Ascending aorta (tissue), 2 donors: ENCODE measurements at regions of chr17 and their contacts with region 1.

Region 1: GRCh38 chr17:18183334-18184142 is at the start of gene ALKBH5:
- DNase-seq: peak; percentile 96 to 99
- H3K4me3 ChIP-seq: peak within 1 kb of the TSS; percentile 86 to 96
- H3K27ac ChIP-seq: peak within 1 kb of the TSS; percentile 97 to 99
- H3K4me1 ChIP-seq: peaks cover 20 to 24% of the 10 kb centered on the region in 2 donors
- H3K27me3 ChIP-seq: no peaks in the 10 kb centered on the region
- CTCF ChIP-seq: peak in 2 of 3 experiments; percentile 10 to 25
- total RNA-seq, gene ALKBH5: 73.4 TPM

Region 2: GRCh38 chr17:17972126-17972951 is 211.2 kb before region 1 on chr17 and contains the starts of genes DRC3 and TOM1L2:
- intact Hi-C with region 1: loop called (anchors 5 kb)
- DNase-seq: peak; percentile 100
- H3K4me3 ChIP-seq: peak within 1 kb of the TSS; percentile 56 to 69
- H3K27ac ChIP-seq: peak within 1 kb of the TSS; percentile 86 to 87
- H3K4me1 ChIP-seq: peaks cover 6 to 17% of the 10 kb centered on the region in 2 donors
- H3K27me3 ChIP-seq: no peaks in the 10 kb centered on the region
- CTCF ChIP-seq: peak in 1 of 3 experiments; percentile 7
- total RNA-seq, gene DRC3: 7.2 TPM
- total RNA-seq, gene TOM1L2: 39.0 TPM

Region 3: DNA sequence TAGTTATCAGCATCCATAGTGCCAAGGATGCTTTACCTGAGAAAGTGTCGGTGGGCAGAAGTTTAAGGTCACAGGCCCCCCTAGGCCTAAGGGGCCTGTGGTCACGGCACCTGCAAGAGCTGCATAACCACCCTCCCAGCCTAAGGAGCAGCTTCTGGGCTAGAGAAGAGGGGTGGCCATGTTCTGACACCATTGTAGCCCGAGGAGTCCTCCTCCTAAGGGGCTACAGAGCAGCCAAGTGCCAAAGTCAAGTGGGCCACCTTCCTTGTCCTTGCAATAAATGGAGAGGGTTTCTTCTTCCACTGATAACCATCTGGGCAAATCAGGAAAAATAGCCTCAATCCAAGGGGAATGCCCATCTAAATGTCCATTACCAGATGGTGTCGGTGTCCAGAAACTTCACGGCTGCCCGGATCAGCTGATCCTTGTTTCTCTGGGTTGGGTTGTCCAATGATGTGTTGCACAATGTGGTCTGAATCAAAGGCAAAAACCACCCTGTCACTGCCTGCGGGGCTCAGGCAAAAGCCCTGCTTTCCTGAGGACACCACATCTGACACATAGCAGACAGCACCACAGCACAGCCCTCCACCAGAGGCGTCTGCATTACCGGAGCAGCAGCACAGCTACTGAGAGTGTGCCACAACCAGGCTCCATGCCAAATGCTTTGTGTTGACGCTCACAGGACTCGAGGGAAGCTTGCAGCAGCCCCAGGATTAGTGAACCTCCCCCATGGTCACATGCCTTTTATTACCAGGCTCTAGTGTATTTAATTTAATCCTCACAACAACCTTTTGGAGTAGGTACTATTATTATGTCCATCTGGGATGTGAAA is 157.4 kb before region 1 on chr17:
- intact Hi-C with region 1: no loop called
- DNase-seq: peak in 1 of 2 donors; percentile 30
- H3K4me3 ChIP-seq: no peak overlapping the region
- H3K27ac ChIP-seq: no peak overlapping the region
- H3K4me1 ChIP-seq: no peaks in the 10 kb centered on the region
- H3K27me3 ChIP-seq: no peaks in the 10 kb centered on the region
- CTCF ChIP-seq: no peak

Region 4: DNA sequence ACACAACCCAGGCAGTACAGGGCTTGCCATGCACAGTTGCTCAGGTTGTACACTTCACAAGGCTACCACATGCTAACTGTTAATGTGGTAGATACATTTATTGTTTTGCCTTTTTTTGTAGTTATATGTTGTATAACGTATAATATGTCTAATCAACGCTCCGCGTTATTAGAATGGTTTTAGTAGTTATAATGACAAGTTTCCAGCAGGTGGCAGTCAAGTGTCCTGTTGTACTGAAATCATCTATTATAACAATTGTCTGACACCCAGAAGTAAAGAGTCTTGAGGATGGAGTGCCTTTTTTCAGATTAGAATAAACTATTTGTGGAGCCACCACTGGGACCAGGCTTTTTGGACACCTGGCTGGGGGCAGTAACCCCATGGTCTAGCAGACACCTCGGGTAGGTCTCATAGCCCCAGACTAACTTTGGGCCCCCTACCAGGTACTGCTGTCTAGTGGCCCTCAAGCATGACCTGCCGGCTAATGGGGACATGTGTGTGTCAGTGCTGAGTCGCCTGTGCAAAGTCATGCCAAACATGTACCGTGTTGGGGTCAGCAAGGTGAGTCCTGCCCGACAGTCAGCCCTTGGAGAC is 42.2 kb before region 1 on chr17:
- intact Hi-C with region 1: loop called (anchors 2 kb)
- DNase-seq: no peak
- H3K4me3 ChIP-seq: no peak overlapping the region
- H3K27ac ChIP-seq: no peak overlapping the region
- H3K4me1 ChIP-seq: peaks cover 0 to 2% of the 10 kb centered on the region in 2 donors
- H3K27me3 ChIP-seq: no peaks in the 10 kb centered on the region
- CTCF ChIP-seq: peak; percentile 40 to 66 (median 63)

Region 5: DNA sequence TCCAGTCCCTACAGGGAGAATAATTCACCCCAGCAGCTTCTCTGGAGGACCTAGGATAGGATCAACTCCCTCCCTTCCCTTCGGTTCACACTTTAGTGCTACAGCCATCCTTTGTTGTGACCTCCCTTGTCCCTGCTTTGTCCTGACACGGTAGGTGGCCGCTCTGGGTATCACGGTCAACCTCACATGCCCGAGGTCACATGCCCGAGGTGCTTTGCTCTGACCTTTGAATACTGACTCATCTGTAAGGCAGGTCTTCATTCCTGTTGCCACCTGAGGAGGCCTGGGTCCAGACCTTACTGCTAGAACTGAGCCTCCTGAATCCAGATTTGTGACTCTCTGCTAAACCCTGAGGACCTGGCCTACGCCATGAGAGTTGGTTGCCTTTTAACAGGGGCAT is 19.8 kb after region 1 on chr17:
- intact Hi-C with region 1: no loop called
- DNase-seq: no peak
- H3K4me3 ChIP-seq: no peak overlapping the region
- H3K27ac ChIP-seq: no peak overlapping the region
- H3K4me1 ChIP-seq: peaks cover 0 to 8% of the 10 kb centered on the region in 2 donors
- H3K27me3 ChIP-seq: no peaks in the 10 kb centered on the region
- CTCF ChIP-seq: no peak

Region 6: DNA sequence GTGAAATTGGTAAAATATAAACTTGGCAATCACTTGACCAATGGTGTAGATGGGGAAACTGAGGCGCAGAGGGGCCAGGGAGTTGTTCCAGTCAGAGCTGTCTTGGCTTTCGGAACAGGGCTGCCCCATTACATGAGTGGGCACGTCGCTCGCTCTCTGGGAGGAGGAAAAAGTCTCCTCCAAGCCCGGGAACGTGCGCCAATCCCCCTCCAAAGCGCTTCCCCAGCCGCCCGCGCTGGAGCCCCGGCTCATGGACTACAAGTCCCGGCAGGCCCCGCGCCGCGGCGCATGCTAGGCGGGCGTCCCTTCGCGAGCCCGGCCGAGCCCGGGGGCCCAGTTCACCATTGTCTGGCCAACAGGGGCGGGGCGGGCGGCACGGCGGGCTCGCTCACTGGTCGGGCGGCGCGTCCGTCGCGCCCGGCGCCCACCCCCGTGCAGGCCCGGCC is 41.6 kb after region 1 on chr17:
- intact Hi-C with region 1: loop called (anchors 1 kb)
- DNase-seq: peak; percentile 85 to 98
- H3K4me3 ChIP-seq: peak overlapping the region; percentile 44 to 61
- H3K27ac ChIP-seq: peak overlapping the region; percentile 31 to 49
- H3K4me1 ChIP-seq: peaks cover 4 to 14% of the 10 kb centered on the region in 2 donors
- H3K27me3 ChIP-seq: no peaks in the 10 kb centered on the region
- CTCF ChIP-seq: no peak

Region 7: GRCh38 chr17:18363101-18364049 is 179.8 kb after region 1 on chr17 and contains the start of gene SHMT1:
- intact Hi-C with region 1: loop called (anchors 10 kb)
- DNase-seq: peak; percentile 83 to 96
- H3K4me3 ChIP-seq: peak within 1 kb of the TSS; percentile 86 to 89
- H3K27ac ChIP-seq: peak within 1 kb of the TSS; percentile 66 to 72
- H3K4me1 ChIP-seq: peaks cover 0 to 6% of the 10 kb centered on the region in 2 donors
- H3K27me3 ChIP-seq: no peaks in the 10 kb centered on the region
- CTCF ChIP-seq: no peak
- total RNA-seq, gene SHMT1: 16.7 TPM